HepG2 (cell line): ENCODE measurements at regions of chr12 and their contacts with region 1.

Region 1: GRCh38 chr12:107607464-107608392 is 77.9 kb upstream of the PWP1 start:
- DNase-seq: peak; percentile 64
- ATAC-seq: peak; percentile 93
- H3K4me3 ChIP-seq: no peak overlapping the region
- H3K27ac ChIP-seq: no peak overlapping the region
- H3K4me1 ChIP-seq: peaks cover 16% of the 10 kb centered on the region
- H3K27me3 ChIP-seq: no peaks in the 10 kb centered on the region; a peak in 1 of 5 replicates
- CTCF ChIP-seq: peak; percentile 95
- EP300 ChIP-seq: no peak
- POLR2A ChIP-seq: no peak
- RAD21 ChIP-seq: peak; percentile 94

Region 2: DNA sequence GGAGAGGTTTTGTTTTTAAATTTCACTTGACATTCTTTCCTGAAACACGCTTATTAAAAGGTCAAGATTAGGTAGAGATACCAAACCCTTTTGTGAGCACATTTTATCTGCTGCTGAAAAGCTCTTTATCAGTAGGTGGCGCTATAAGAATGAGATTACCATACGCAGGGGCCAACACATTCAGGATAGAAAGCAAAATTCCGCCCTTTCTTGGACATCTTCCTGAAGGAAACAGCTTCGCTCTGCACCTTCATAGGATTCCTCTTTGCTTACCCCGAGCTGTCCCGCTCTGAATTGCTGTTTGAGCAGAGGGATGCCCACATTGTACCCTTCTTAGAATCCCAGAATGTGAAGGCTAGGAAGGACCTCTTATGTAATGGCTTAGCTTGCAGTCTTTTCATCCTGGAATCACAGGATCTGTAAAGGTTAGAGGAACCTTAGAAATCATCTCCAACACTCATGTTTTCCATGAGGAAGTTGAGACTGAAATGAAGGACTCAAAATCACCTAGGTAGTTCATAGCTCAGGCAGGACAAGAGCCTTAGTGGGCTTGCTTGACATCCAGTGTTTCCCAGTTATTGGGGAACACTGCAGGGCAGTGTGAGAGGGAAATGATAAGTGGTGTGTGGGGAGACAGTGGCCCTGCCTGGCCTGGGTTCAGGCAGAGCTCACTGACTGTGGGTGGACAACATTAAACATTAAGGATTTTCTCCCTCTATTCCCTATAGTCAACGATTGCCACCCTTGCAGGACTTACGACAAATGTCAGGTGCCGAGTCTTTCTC is 475.7 kb before region 1 on chr12:
- CTCF ChIA-PET with region 1: interaction called, 25 read pairs
- POLR2A ChIA-PET with region 1: no interaction called
- in situ Hi-C with region 1: loop called (anchors 5 kb)
- intact Hi-C with region 1: loop called (anchors 1 kb)
- DNase-seq: peak; percentile 49
- ATAC-seq: peak; percentile 73
- H3K4me3 ChIP-seq: no peak overlapping the region
- H3K27ac ChIP-seq: no peak overlapping the region
- H3K4me1 ChIP-seq: peaks cover 23% of the 10 kb centered on the region
- H3K27me3 ChIP-seq: no peaks in the 10 kb centered on the region
- CTCF ChIP-seq: peak; percentile 86
- EP300 ChIP-seq: no peak
- POLR2A ChIP-seq: no peak
- RAD21 ChIP-seq: peak; percentile 75

Region 3: DNA sequence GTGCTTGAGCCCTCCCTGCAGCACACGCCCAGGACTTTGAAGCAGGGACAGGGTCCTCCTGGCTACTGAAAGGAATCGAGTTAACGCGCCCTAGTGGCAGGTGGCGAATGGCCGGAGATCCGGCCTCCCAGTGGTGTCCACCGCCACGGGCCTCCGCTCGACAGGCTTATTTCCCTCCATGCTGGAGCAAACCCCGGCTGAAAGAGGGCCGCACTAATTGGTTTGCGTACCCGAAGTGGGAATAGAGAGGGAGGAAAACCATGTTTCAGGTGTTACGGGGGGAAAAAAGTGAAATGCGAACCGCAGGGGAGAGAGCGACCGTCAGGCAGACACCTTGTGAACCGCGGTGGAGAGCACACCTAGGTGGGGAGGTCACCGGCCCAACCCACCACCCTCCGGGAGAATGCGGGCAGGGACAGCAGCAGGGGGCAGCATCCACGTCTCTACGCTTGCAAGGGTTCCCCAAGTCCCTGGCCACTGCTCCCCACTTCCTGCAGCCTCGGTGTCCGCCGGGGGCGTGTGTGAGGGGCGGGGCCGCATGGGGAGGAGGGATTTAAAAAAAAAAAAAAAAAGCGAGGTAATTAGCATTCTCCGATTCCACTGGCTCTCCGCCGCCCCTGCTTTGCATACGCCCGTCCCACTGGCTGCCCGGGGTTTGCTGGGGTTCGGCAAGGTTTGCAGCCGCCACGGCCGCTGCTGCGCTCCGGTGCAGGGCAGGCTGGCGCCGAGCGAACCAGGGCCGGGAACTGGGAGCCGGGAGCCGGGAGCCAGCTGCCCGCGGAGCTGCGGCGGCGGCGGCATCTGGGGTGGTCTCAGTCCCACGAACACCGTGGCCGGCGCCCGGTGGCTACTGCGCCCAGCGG is 289.7 kb before region 1 on chr12:
- CTCF ChIA-PET with region 1: interaction called, 3 read pairs
- POLR2A ChIA-PET with region 1: no interaction called
- in situ Hi-C with region 1: no loop called
- intact Hi-C with region 1: loop called (anchors 5 kb)
- DNase-seq: peak; percentile 82
- ATAC-seq: peak; percentile 95
- H3K4me3 ChIP-seq: peak overlapping the region; percentile 76 to 89 (median 82)
- H3K27ac ChIP-seq: peak overlapping the region; percentile 52
- H3K4me1 ChIP-seq: peaks cover 18% of the 10 kb centered on the region; the same call in 1 of the 2 replicates
- H3K27me3 ChIP-seq: peaks cover 1 to 16% of the 10 kb centered on the region in 2 experiments; a peak in 2 of 5 replicates
- CTCF ChIP-seq: peak; percentile 68
- EP300 ChIP-seq: no peak
- POLR2A ChIP-seq: peak; percentile 50 to 64; a peak in 3 of 4 replicates
- RAD21 ChIP-seq: peak; percentile 51

Region 4: GRCh38 chr12:107402041-107403022 is 205.4 kb before region 1 on chr12:
- CTCF ChIA-PET with region 1: interaction called, 13 read pairs
- POLR2A ChIA-PET with region 1: no interaction called
- in situ Hi-C with region 1: loop called (anchors 10 kb)
- intact Hi-C with region 1: loop called (anchors 1 kb)
- DNase-seq: peak; percentile 69
- ATAC-seq: peak; percentile 83
- H3K4me3 ChIP-seq: no peak overlapping the region
- H3K27ac ChIP-seq: no peak overlapping the region
- H3K4me1 ChIP-seq: peaks cover 13% of the 10 kb centered on the region
- H3K27me3 ChIP-seq: no peaks in the 10 kb centered on the region; a peak in 1 of 5 replicates
- CTCF ChIP-seq: peak; percentile 82
- EP300 ChIP-seq: no peak
- POLR2A ChIP-seq: no peak
- RAD21 ChIP-seq: peak; percentile 88

Region 5: DNA sequence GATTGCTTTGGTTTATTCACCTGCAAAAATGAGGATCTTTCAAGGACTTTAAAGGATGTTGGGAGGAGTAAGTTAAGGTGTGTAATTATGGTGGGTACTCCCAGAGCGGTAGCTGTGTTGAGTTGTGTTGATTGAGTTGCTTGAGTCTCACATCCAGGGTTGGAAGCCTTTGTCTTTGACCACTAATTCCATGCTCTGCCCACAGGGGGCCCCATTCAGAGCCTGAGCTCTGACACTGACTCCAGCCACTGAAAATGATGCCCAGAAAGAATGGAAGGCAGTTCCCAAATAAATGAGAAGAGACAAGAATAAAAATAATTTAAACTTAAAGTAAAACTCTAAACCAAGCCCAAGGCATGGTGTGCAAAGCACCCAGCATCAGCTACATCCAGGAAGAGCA is 159.5 kb before region 1 on chr12:
- CTCF ChIA-PET with region 1: interaction called, 6 read pairs
- POLR2A ChIA-PET with region 1: no interaction called
- in situ Hi-C with region 1: loop called (anchors 5 kb)
- intact Hi-C with region 1: loop called (anchors 1 kb)
- DNase-seq: no peak
- ATAC-seq: peak; percentile 56; the same call in 2 of the 3 replicates
- H3K4me3 ChIP-seq: no peak overlapping the region
- H3K27ac ChIP-seq: no peak overlapping the region
- H3K4me1 ChIP-seq: no peaks in the 10 kb centered on the region
- H3K27me3 ChIP-seq: no peaks in the 10 kb centered on the region
- CTCF ChIP-seq: peak; percentile 52
- EP300 ChIP-seq: no peak
- POLR2A ChIP-seq: no peak
- RAD21 ChIP-seq: no peak